Astrocyte of the cerebellum (primary cell): ENCODE measurements at regions of chr1 and their contacts with region 1.

Region 1: GRCh38 chr1:185559684-185560331 is 174.4 kb upstream of the HMCN1 start:
- DNase-seq: peak; percentile 13
- H3K4me3 ChIP-seq: no peak overlapping the region
- CTCF ChIP-seq: peak; percentile 51

Region 2: GRCh38 chr1:185483664-185484450 is 76.0 kb before region 1 on chr1:
- in situ Hi-C with region 1: no loop called
- DNase-seq: peak; percentile 35
- H3K4me3 ChIP-seq: no peak overlapping the region
- CTCF ChIP-seq: no peak

Region 3: DNA sequence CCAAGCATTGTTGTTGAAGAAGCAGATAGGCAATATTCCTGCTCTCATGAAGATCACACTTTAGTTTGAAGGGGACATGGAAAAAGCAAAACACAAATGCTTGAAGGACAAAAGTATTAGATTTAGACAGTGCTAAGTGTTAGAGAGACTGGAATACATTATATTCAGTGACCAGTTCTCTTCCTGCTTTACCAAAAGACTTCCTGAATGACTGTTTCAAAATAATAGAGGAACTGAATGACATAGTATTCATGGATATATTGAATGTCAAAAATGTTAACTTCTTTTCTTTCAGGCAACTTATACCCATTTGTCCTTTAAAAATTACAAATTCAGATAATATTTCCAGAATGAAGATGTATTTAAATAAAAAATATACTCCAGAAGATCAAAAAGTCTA is 64.8 kb before region 1 on chr1:
- in situ Hi-C with region 1: loop called (anchors 10 kb)
- DNase-seq: no peak
- H3K4me3 ChIP-seq: no peak overlapping the region
- CTCF ChIP-seq: no peak

Region 4: DNA sequence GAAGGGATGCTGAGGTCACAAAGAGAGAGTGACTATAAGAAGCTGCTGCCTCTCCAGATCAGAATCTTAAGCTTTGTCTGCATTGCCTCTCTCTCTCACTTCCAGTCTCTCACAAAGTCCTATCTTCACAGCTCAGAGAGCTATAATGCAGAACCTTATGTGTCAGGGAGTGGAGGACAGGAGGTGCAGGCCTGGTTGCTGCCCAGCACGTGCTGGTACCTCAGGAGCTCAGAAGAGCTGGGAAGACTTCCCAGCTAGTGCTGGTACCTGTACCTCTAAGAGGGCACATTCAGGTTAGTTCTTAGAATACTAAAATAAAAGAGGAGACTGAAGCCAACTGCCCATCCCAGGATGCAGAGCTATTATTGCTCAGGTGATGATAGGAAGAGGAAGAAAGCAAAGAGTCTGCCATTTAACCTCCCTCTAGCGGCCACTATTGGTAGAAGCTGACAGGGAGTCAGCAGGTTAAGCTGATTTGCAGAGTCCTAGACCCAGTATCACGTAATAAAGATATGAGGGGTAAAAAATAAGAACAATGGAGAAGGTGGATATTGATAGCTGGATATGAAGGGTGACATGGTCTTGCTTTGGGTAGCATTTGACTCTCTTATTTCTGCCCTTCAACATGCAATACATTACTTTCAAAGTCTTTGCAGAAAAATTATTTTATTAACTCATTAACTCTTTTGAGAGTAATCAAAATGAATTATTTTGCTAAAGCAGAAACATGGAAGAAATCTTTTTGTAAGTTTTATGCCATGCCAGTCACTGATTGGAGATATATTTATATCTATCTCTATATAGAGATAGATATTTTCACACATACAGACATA is 36.2 kb after region 1 on chr1:
- in situ Hi-C with region 1: no loop called
- DNase-seq: peak; percentile 23
- H3K4me3 ChIP-seq: no peak overlapping the region
- CTCF ChIP-seq: peak; percentile 77

Region 5: GRCh38 chr1:185646202-185646683 is 86.4 kb after region 1 on chr1:
- in situ Hi-C with region 1: loop called (anchors 10 kb)
- DNase-seq: peak; percentile 99
- H3K4me3 ChIP-seq: no peak overlapping the region
- CTCF ChIP-seq: no peak